GM12878 (cell line): ENCODE measurements at regions of chr6 and their contacts with region 1.

Region 1: GRCh38 chr6:166402582-166403277 is 20.0 kb upstream of the MPC1 start:
- DNase-seq: no peak
- ATAC-seq: no peak
- H3K4me3 ChIP-seq: no peak overlapping the region
- H3K27ac ChIP-seq: no peak overlapping the region
- H3K4me1 ChIP-seq: no peaks in the 10 kb centered on the region
- H3K27me3 ChIP-seq: no peaks in the 10 kb centered on the region
- CTCF ChIP-seq: no peak
- EP300 ChIP-seq: no peak
- POLR2A ChIP-seq: no peak
- RAD21 ChIP-seq: no peak

Region 2: GRCh38 chr6:165884813-165885765 is 517.6 kb before region 1 on chr6:
- CTCF ChIA-PET with region 1: interaction called, 3 read pairs
- POLR2A ChIA-PET with region 1: no interaction called
- RAD21 ChIA-PET with region 1: no interaction called
- SMC1A ChIA-PET with region 1: no interaction called
- in situ Hi-C with region 1: loop called (anchors 10 kb)
- intact Hi-C with region 1: loop called (anchors 5 kb)
- DNase-seq: peak; percentile 5
- ATAC-seq: peak; percentile 100
- H3K4me3 ChIP-seq: no peak overlapping the region
- H3K27ac ChIP-seq: no peak overlapping the region
- H3K4me1 ChIP-seq: no peaks in the 10 kb centered on the region
- H3K27me3 ChIP-seq: no peaks in the 10 kb centered on the region
- CTCF ChIP-seq: peak; percentile 88
- EP300 ChIP-seq: no peak
- POLR2A ChIP-seq: no peak
- RAD21 ChIP-seq: peak; percentile 83

Region 3: DNA sequence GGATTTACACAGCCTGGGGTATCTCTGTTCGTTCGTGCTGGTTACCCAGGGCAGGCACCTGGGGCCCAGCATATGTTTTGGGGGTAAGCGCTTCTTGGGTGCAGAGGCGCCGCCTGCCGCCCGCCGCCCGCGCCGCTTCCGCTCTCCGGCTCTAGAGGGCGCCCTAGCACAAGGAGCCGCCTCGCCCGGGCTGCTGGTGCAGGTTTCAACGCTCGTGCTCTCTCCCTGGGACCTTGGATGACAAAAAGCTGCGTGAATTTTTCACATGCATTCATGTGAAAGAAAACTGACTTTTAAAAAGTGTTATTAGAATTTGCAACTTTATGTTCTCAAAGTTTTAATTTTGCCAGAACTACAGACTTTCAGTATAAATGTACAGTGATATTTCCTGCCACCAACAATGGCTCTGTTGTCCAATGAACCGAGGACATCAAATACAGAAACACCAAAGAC is 127.0 kb before region 1 on chr6:
- CTCF ChIA-PET with region 1: interaction called, 105 read pairs
- POLR2A ChIA-PET with region 1: no interaction called
- RAD21 ChIA-PET with region 1: interaction called, 54 read pairs
- SMC1A ChIA-PET with region 1: interaction called, 56 read pairs
- in situ Hi-C with region 1: no loop called
- intact Hi-C with region 1: loop called (anchors 1 kb)
- DNase-seq: no peak
- ATAC-seq: peak; percentile 93
- H3K4me3 ChIP-seq: no peak overlapping the region
- H3K27ac ChIP-seq: no peak overlapping the region
- H3K4me1 ChIP-seq: peaks cover 28% of the 10 kb centered on the region
- H3K27me3 ChIP-seq: no peaks in the 10 kb centered on the region; a peak in 1 of 4 replicates
- CTCF ChIP-seq: peak; percentile 99 to 100 (median 100); a peak in 5 of 6 replicates
- EP300 ChIP-seq: no peak
- POLR2A ChIP-seq: no peak
- RAD21 ChIP-seq: peak; percentile 99

Region 4: DNA sequence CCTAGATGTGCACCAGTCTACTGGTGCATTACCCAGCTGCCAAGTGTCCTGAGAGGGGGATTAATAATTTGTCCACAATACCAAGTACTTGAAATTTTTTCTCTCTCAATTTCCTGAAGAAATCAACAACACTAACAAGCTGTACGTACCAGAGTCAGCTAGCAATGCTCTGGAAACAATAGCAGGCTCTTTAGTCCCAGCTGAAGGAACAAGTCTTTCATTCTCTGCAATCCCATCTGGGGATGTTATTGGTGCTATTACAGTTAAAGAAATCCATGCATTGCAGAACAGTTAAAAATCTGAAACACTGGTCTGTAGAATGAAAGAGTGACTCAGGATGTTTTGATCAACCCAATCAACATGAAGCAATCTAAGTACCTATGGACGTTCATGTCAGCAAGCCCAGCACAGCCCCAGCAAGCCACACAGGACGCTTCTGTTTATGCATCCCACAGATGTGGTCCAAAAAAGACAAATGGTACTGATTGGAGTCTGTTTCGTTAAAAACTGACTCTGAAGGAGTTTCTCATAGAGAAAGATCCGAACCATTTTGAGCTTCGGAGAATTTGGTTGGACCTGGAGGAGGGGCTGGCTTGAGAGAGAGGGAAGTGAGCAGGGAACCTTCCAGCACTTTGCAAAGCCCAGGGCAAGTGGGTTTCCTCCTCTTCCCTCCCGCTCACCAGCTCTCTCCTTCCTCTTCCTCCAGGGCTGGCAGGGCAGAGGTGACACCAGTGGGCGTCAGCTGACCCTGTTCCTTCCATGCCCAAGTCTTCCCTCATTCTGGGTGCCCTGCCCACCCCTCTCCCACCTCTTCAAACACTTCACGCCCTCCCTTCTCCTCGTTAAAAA is 106.5 kb before region 1 on chr6:
- CTCF ChIA-PET with region 1: interaction called, 13 read pairs
- POLR2A ChIA-PET with region 1: no interaction called
- RAD21 ChIA-PET with region 1: interaction called, 4 read pairs
- SMC1A ChIA-PET with region 1: interaction called, 4 read pairs
- in situ Hi-C with region 1: no loop called
- intact Hi-C with region 1: no loop called
- DNase-seq: no peak
- ATAC-seq: no peak
- H3K4me3 ChIP-seq: no peak overlapping the region
- H3K27ac ChIP-seq: no peak overlapping the region
- H3K4me1 ChIP-seq: no peaks in the 10 kb centered on the region
- H3K27me3 ChIP-seq: no peaks in the 10 kb centered on the region
- CTCF ChIP-seq: no peak
- EP300 ChIP-seq: no peak
- POLR2A ChIP-seq: no peak
- RAD21 ChIP-seq: no peak

Region 5: DNA sequence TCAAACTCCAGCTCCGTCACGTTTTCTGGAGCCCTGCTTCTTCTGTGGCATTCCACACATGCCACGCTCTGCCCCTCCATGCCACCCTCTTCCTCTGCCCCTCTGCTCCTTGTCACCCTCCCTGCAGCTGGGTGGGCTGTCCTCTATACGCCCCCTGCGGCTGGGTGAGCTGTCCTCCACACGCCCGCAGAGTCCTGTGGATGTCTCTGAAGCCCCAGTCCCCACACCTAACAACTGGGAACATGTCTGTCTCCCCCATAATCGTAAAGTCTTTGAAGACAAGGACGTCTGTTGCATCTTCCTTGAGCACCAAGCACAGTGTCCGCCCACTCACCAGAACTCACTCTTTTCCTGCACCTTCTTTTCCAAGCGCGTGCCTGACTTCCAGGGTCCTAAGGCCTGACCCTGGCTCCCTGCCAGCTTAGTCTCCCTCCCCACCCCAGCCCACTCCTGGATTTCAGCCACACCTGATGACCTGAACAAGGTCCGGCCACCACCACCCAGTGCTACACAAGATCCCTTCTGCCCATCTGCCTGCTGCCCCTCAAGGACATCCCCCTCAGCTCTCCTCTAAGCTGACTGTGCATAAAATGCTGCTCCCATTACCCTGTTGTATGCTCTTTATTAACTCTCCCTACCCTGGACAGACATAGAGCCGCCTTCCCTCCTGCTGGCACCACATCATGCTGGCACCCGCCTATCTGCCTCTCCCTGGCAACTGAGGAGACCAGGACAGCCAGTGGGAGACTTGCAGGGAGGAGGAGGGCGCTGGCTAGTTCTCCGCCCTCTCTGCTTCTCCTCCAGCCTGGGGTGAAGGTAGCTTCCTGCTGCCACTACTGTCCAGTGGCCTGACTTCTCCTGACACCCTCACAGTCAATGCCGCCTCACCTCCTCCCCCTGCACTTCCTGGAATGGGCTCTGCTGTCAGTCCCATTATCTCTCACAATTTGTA is 83.8 kb before region 1 on chr6:
- CTCF ChIA-PET with region 1: interaction called, 317 read pairs
- POLR2A ChIA-PET with region 1: interaction called, 10 read pairs
- RAD21 ChIA-PET with region 1: interaction called, 165 read pairs
- SMC1A ChIA-PET with region 1: interaction called, 72 read pairs
- in situ Hi-C with region 1: no loop called
- intact Hi-C with region 1: no loop called
- DNase-seq: no peak
- ATAC-seq: peak; percentile 28
- H3K4me3 ChIP-seq: no peak overlapping the region
- H3K27ac ChIP-seq: no peak overlapping the region
- H3K4me1 ChIP-seq: no peaks in the 10 kb centered on the region
- H3K27me3 ChIP-seq: no peaks in the 10 kb centered on the region
- CTCF ChIP-seq: no peak
- EP300 ChIP-seq: no peak
- POLR2A ChIP-seq: peak; percentile 65
- RAD21 ChIP-seq: no peak

Region 6: GRCh38 chr6:166382933-166383801 is 19.6 kb before region 1 on chr6 and contains the start of gene MPC1:
- CTCF ChIA-PET with region 1: interaction called, 63 read pairs
- POLR2A ChIA-PET with region 1: interaction called, 3 read pairs
- RAD21 ChIA-PET with region 1: interaction called, 16 read pairs
- SMC1A ChIA-PET with region 1: interaction called, 17 read pairs
- in situ Hi-C with region 1: no loop called
- intact Hi-C with region 1: no loop called
- DNase-seq: peak; percentile 81
- ATAC-seq: peak; percentile 94
- H3K4me3 ChIP-seq: peak within 1 kb of the TSS; percentile 88
- H3K27ac ChIP-seq: peak within 1 kb of the TSS; percentile 81
- H3K4me1 ChIP-seq: peaks cover 5% of the 10 kb centered on the region
- H3K27me3 ChIP-seq: no peaks in the 10 kb centered on the region
- CTCF ChIP-seq: 0 out of 6 replicates have a peak, but pooled peaks of 1 of the 3 experiments have one; percentile 0
- EP300 ChIP-seq: no peak
- POLR2A ChIP-seq: peak; percentile 88
- RAD21 ChIP-seq: no peak
- polyA plus RNA-seq, gene MPC1: 81.5 to 97.0 TPM

Region 7: DNA sequence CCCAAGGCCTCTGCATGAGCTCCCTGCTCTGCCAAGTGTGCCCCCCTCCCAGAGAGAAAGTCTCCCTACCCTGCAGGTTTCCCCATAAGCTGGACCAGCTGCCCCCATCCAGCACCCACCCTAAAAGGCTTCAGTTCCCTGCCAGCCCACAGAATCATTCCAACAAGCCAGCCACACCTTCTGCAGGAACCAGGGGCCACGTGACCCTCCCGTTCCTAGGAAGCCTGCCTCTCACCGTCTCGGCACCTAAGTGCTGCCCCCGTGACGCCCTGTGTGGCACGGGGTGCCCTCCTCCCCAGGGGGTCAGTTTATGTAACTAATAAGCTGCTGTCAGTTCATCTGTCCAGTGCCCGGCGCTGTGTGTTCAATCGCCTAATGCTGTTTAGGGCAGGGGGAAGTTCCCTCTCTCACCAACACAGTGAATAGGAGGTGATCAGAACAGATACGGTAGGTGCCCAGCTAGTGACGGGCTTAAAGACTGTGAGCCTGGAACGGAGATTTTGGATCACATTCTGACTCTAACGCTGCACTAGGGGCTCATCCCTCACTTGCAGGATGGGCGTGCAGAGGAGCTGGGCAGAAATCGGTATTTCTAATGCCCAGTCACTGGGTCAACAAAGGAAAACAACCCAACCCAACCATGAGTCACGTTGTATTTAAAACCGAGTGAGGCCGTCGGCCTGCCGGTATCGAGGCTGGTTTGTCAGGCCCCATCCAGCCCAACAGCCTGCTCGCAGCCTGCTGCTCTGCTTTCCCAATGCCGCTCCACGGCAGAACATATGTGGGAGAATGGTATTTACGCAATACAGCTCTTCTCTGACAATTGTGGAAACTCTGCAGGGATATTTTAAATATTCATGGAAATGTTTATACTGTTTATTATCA is 127.7 kb after region 1 on chr6:
- CTCF ChIA-PET with region 1: no interaction called
- POLR2A ChIA-PET with region 1: no interaction called
- RAD21 ChIA-PET with region 1: no interaction called
- SMC1A ChIA-PET with region 1: no interaction called
- in situ Hi-C with region 1: no loop called
- intact Hi-C with region 1: no loop called
- DNase-seq: no peak
- ATAC-seq: no peak
- H3K4me3 ChIP-seq: no peak overlapping the region
- H3K27ac ChIP-seq: no peak overlapping the region
- H3K4me1 ChIP-seq: no peaks in the 10 kb centered on the region
- H3K27me3 ChIP-seq: no peaks in the 10 kb centered on the region
- CTCF ChIP-seq: no peak
- EP300 ChIP-seq: no peak
- POLR2A ChIP-seq: no peak
- RAD21 ChIP-seq: no peak